GM10248 (cell line): ENCODE measurements at regions of chr3 and their contacts with region 1.

Region 1: DNA sequence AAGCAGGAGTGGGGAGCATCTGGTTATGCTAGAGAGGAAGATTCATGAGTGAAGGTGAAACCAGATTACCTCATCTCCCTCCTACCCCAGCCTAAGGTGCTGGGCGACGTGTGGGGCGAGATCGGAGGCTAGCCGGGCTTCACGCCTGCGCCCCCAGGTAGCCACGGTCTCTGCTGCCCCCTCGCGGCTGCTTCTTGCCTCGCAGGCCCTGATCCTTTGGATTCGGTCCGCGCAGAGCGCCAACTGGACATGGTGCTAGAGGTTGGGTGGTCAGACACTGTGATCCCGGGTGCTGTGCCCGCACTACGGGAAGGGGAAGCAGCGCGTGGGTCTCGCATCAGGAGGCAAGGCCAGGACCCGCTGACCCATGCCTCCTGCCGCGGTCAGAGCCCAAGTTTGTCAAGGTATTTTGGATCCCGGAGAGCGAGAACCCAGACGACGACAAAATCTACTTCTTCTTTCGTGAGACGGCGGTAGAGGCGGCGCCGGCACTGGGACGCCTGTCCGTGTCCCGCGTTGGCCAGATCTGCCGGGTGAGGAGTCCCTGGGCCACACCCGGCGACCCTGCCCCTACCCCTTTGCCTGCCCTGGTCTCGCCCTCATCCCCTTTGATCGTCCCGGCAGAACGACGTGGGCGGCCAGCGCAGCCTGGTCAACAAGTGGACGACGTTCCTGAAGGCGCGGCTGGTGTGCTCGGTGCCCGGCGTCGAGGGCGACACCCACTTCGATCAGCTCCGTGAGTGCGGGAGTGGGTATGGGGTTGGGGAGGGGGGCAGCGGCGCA is 4.2 kb downstream of the SEMA3B start:
- DNase-seq: peak; percentile 98
- CTCF ChIP-seq: peak; percentile 98

Region 2: GRCh38 chr3:49539659-49540560 is 733.2 kb before region 1 on chr3:
- CTCF ChIA-PET with region 1: no interaction called
- POLR2A ChIA-PET with region 1: no interaction called
- DNase-seq: peak; percentile 96
- CTCF ChIP-seq: peak; percentile 90

Region 3: DNA sequence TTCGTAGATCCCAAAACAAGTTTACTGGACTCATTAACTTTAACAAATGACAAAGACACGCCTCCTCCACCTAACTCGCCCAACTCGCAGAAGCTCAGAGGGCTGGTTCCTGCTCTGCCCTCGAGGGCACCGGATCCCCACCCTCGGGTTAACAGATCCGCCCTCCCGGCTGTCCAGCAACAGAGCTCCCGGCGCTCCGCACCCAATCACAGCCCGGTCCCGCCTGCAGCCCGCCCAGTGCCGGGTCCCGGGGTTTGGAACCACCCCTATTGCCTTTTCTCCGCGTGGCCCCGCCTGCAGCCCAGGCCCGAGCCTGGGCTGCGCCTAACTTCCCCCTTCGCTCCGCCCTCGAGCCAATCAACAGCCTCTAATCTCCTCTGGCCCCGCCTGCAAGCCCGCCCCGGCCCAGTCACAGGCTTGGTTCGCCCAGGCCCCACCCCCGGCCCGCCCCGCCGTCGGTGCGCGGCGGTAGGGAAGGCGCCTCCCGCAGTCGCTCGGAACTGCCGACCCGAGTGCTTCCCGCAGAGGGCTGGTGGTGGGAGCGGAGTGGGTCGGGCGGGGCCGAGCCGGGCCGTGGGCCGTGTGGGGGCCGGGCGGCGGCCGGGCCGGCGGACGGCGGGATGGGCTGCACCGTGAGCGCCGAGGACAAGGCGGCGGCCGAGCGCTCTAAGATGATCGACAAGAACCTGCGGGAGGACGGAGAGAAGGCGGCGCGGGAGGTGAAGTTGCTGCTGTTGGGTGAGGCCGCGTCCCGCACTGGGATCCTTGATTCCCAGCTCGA is 37.2 kb before region 1 on chr3 and contains the start of gene GNAI2:
- CTCF ChIA-PET with region 1: interaction called, 3 read pairs
- POLR2A ChIA-PET with region 1: interaction called, 13 read pairs
- DNase-seq: peak; percentile 99
- CTCF ChIP-seq: no peak

Region 4: GRCh38 chr3:51896607-51897305 is 1623.7 kb after region 1 on chr3:
- CTCF ChIA-PET with region 1: no interaction called
- POLR2A ChIA-PET with region 1: no interaction called
- DNase-seq: no peak
- CTCF ChIP-seq: no peak